GM10248 (cell line): ENCODE measurements at regions of chr22 and their contacts with region 1.

Region 1: GRCh38 chr22:32796865-32797573 is 4.5 kb upstream of the TIMP3 start:
- DNase-seq: peak; percentile 70
- CTCF ChIP-seq: peak; percentile 82

Region 2: DNA sequence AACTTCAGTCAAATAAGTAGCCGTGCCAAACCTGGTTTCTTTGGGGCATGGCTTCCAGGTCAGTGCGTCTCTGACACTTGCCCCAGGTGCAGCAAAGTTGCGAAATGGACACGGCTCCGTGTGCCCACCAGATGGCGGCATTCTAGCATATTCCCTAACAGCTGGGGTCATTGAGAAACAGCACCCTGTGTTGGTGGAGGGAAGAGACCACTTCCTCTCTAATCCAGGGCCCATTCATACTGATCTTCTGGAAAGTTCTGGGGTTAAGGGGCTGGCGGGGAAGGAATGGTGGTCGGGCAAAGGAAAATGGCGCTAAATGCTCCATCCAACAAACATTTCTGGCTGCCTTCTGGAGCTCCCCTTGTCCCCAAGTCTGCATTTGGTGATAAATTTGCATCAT is 136.7 kb before region 1 on chr22:
- CTCF ChIA-PET with region 1: interaction called, 175 read pairs
- POLR2A ChIA-PET with region 1: no interaction called
- DNase-seq: peak; percentile 71
- CTCF ChIP-seq: peak; percentile 66

Region 3: DNA sequence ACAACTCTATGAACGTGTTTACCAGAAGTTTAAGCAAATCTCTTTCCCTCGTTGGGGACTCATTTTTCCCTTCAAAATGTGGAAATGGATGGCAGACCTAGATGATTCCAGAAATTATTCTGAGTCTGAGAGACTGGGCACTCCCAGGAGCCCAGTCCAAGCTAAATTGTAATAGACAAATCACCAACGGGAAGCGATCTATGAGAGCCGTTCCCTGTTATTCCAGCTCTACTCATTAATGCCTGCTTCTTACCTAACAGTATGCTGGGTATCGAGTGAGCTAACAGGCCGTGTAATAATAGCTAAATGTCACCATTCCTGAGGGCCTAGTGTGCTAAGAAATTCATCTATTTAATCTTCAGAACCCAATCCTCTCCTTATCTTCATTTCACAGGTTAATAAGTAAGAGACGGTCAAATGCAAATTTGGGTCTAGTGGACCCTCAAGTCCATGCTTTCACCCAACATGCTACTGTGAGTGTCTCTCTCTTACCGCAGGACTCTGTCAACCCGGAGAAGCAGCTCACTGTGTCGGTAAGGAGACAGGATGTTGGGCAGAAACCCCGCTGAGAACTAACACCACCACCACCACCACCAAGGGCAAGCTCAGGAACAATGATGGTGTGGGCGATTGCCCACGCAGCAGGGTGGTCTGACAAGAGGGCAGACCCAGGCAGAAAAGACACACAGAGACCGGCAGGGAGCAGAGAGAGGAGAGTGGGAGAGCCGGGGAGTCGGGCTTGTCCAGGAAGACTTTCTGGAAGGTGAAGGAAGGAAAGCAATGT is 52.7 kb before region 1 on chr22:
- CTCF ChIA-PET with region 1: interaction called, 11 read pairs
- POLR2A ChIA-PET with region 1: no interaction called
- DNase-seq: no peak
- CTCF ChIP-seq: no peak

Region 4: DNA sequence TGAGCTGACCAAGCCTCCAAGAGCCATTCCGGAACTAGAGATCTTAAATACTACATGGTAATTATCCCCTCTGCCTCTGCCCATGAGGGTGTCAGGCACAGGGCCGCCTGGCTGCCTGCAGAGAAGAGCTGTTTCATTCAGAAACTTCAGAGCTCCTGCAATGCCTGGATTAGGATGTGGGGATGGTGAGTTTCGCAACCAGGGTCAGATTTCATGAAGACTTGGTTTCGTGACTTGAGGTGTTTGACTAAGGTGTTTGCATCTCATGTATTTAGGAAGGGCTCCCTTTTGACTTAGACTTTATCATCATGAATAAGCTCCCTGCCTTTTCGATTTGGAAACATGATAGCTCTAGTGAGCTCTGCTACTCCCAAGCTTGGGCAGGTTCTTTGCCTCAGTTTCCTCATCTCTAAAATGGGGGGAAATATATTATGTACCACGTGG is 13.6 kb after region 1 on chr22:
- CTCF ChIA-PET with region 1: interaction called, 49 read pairs
- POLR2A ChIA-PET with region 1: no interaction called
- DNase-seq: no peak
- CTCF ChIP-seq: no peak